ENCODE measurements at regions of chr18 and their contacts with region 1.

Region 1: DNA sequence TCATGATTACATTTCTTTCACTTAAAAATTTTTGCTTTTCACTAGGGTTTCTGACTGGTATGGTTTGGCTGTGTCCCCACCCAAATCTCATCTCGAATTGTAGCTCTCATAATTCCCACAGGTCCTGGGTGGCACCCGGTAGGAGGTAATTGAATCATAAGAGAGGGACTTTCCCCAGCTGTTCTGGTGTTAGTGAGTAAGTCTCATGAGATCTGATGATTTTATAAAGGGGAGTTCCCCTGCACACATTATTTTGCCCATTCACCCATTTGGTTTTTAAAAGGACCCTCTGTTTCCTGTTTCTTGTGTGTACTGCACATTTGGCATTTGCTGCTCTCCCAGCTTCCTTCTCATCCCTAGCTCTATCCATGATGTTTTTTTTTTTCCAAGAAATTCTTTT is 27.8 kb upstream of the NETO1 start:
- DNase-seq: no peak
- H3K4me3 ChIP-seq: no peak overlapping the region
- H3K27ac ChIP-seq: no peak overlapping the region
- H3K4me1 ChIP-seq: no peaks in the 10 kb centered on the region
- H3K27me3 ChIP-seq: no peaks in the 10 kb centered on the region
- CTCF ChIP-seq: no peak
- POLR2A ChIP-seq: no peak

Region 2: GRCh38 chr18:72948439-72948838 is 52.9 kb after region 1 on chr18:
- intact Hi-C with region 1: loop called (anchors 10 kb)
- DNase-seq: no peak
- H3K4me3 ChIP-seq: no peak overlapping the region
- H3K27ac ChIP-seq: no peak overlapping the region
- H3K4me1 ChIP-seq: no peaks in the 10 kb centered on the region
- H3K27me3 ChIP-seq: no peaks in the 10 kb centered on the region
- CTCF ChIP-seq: no peak
- POLR2A ChIP-seq: no peak